Activated B cell treated with CpG ODN at 0.5 μM for 24 hours (primary cell): ENCODE measurements at regions of chr4 and their contacts with region 1.

Region 1: GRCh38 chr4:40976343-40976742 is 226.6 kb downstream of the NSUN7 start:
- DNase-seq: no peak
- ATAC-seq: no peak
- H3K4me3 Mint-ChIP-seq: no peak overlapping the region
- H3K27ac Mint-ChIP-seq: no peak overlapping the region
- H3K4me1 Mint-ChIP-seq: no peaks in the 10 kb centered on the region
- H3K27me3 Mint-ChIP-seq: peaks cover 6% of the 10 kb centered on the region
- CTCF ChIP-seq: no peak

Region 2: GRCh38 chr4:41095202-41095872 is 119.0 kb after region 1 on chr4:
- CTCF ChIA-PET with region 1: no interaction called
- POLR2A ChIA-PET with region 1: no interaction called
- intact Hi-C with region 1: no loop called
- DNase-seq: no peak
- ATAC-seq: no peak
- H3K4me3 Mint-ChIP-seq: no peak overlapping the region
- H3K27ac Mint-ChIP-seq: no peak overlapping the region
- H3K4me1 Mint-ChIP-seq: no peaks in the 10 kb centered on the region
- H3K27me3 Mint-ChIP-seq: no peaks in the 10 kb centered on the region
- CTCF ChIP-seq: no peak

Region 3: GRCh38 chr4:41214136-41214824 is 237.9 kb after region 1 on chr4 and contains the start of gene APBB2:
- CTCF ChIA-PET with region 1: interaction called, 10 read pairs
- POLR2A ChIA-PET with region 1: no interaction called
- intact Hi-C with region 1: loop called (anchors 1 kb)
- DNase-seq: peak; percentile 31
- ATAC-seq: peak; percentile 60
- H3K4me3 Mint-ChIP-seq: peak within 1 kb of the TSS; percentile 77
- H3K27ac Mint-ChIP-seq: no peak within 1 kb of the TSS
- H3K4me1 Mint-ChIP-seq: peaks cover 31% of the 10 kb centered on the region
- H3K27me3 Mint-ChIP-seq: peaks cover 52% of the 10 kb centered on the region
- CTCF ChIP-seq: no peak
- total RNA-seq, gene APBB2: 2.1 and 3.7 TPM in 2 replicates